PC-3 (cell line): ENCODE measurements at regions of chr3 and their contacts with region 1.

Region 1: DNA sequence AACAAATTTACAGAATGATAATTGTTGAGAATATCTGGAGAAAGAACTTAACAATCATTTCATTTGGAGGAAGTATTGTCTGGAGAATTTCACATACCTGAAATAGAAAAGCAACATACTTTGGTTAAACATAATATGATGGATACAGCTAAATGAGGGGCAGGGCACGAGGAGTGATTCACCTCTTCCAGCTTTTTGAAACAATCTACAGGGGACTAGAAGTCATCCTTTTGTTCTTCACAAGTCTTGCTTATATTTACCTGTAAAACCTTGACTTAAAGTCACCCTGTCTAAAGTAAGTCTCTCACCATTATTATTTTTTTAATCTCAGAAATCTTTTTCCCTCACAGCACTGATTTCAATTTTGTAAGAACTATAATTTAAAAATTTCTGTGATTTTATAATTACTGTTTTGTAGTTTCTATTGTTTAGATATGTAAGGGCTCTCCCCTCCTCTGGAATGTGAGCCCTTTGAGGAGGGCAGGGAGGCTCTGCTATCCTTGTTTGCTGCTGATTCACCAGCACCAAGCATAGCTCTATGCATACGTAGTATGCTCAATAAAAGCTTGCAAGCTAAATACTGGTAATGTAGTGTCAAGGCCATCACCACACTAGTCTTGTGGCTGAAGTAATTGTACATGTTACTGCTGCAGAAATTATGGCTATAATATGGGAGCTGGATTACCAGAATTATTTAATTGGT is 193.9 kb upstream of the THRB start:
- DNase-seq: peak; percentile 87
- ATAC-seq: peak; percentile 96
- H3K4me3 ChIP-seq: no peak overlapping the region
- H3K27ac ChIP-seq: peak overlapping the region; percentile 12
- H3K4me1 ChIP-seq: peaks cover 39% of the 10 kb centered on the region
- H3K27me3 ChIP-seq: no peaks in the 10 kb centered on the region
- CTCF ChIP-seq: no peak

Region 2: DNA sequence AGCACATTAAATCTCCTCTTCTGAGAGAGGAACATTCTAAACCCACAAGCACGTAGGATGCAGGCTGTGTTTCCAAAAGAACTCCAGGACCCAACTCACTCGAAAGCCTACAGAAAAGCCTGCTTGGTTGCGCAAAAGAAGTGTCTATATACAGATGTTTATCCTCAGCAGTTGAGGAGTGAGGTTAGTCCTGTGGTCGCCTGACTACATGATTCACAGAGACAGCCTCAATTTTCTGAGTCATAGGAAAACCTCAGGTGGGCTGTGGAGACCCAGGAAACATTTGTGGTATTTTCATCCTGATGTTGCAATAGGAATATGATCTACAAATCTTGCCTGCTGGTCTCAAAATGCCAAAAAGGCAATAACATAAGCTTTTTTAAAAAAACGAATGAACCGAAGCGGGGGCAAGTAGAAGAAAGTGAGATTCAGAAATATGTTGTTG is 10.2 kb before region 1 on chr3:
- CTCF ChIA-PET with region 1: no interaction called
- POLR2A ChIA-PET with region 1: no interaction called
- intact Hi-C with region 1: no loop called
- DNase-seq: peak; percentile 93
- ATAC-seq: peak; percentile 78
- H3K4me3 ChIP-seq: peak overlapping the region; percentile 60
- H3K27ac ChIP-seq: peak overlapping the region; percentile 27
- H3K4me1 ChIP-seq: peaks cover 27% of the 10 kb centered on the region
- H3K27me3 ChIP-seq: no peaks in the 10 kb centered on the region
- CTCF ChIP-seq: no peak

Region 3: DNA sequence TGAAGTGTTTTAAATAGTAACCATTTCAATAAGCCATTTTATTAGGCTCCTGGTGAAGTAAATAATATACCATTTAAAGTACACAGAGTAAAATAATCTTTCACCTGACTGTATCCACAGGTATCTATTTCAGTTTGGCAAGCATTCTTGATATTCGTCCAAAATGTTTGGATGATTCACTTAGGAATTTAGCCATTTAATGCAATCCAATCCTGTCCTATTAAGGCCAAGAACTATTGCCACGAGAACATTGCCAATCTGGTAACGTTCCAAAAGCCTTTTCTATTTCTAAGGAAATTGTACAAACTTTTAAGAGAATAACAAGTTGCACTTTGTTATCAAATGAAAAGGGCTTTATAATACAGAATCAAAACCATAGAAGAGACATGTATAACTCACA is 15.9 kb after region 1 on chr3:
- CTCF ChIA-PET with region 1: no interaction called
- POLR2A ChIA-PET with region 1: no interaction called
- intact Hi-C with region 1: loop called (anchors 1 kb)
- DNase-seq: peak; percentile 100
- ATAC-seq: no peak; the same call in 1 of the 2 replicates
- H3K4me3 ChIP-seq: no peak overlapping the region
- H3K27ac ChIP-seq: no peak overlapping the region
- H3K4me1 ChIP-seq: peaks cover 11% of the 10 kb centered on the region
- H3K27me3 ChIP-seq: no peaks in the 10 kb centered on the region
- CTCF ChIP-seq: no peak